ENCODE measurements at regions of chr6 and their contacts with region 1.

Region 1: GRCh38 chr6:28895134-28895812 is 28.5 kb downstream of the TRIM27 start:
- DNase-seq: peak; percentile 92 to 96
- H3K4me3 ChIP-seq: peak overlapping the region; percentile 62
- H3K4me3 Mint-ChIP-seq: peak overlapping the region; percentile 95
- H3K27ac Mint-ChIP-seq: peak overlapping the region; percentile 98
- H3K4me1 ChIP-seq: no peaks in the 10 kb centered on the region
- H3K4me1 Mint-ChIP-seq: no peaks in the 10 kb centered on the region
- H3K27me3 ChIP-seq: no peaks in the 10 kb centered on the region
- H3K27me3 Mint-ChIP-seq: no peaks in the 10 kb centered on the region
- CTCF ChIP-seq: no peak

Region 2: DNA sequence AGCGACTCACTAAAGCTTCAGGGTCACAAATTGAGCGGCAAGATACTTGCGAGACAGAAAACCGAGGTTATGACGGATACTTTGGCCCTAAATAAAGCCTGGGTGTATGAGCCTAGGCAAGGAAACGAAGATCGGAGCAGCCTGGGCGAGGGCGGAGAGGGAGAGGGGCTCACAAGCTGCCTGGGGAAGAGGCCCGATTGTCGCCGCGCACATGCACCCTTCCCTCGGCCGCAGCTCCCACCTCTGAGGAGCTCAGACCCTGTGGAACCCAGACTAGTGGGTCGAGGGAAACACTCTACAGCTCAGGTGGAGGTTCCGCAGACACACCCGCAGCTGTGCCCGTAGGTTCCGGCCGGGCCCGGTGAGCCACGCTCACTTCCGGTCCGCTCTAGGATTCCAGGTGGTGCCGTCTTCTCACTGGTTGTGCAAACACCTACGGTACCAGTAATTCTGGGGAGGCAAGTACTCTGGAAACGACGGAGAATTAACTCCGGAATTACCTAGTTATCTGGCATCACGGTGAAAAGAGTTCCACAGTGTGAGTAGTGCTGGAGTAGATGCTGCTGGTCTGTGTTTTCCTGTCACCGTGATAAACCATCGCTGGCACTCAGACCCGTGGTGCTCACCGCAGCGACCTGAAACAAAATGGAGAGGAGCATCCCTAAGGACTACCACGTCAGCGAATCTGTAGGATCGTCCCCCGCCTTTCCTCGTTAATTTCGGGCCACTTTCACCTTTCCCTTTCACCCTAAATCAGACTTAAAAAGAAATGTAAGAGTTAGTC is 308.1 kb before region 1 on chr6:
- CTCF ChIA-PET with region 1: no interaction called
- POLR2A ChIA-PET with region 1: no interaction called
- intact Hi-C with region 1: no loop called
- DNase-seq: no peak
- H3K4me3 ChIP-seq: no peak overlapping the region
- H3K4me3 Mint-ChIP-seq: no peak overlapping the region
- H3K27ac Mint-ChIP-seq: no peak overlapping the region
- H3K4me1 ChIP-seq: no peaks in the 10 kb centered on the region
- H3K4me1 Mint-ChIP-seq: peaks cover 11% of the 10 kb centered on the region
- H3K27me3 ChIP-seq: no peaks in the 10 kb centered on the region
- H3K27me3 Mint-ChIP-seq: peaks cover 7% of the 10 kb centered on the region
- CTCF ChIP-seq: no peak

Region 3: DNA sequence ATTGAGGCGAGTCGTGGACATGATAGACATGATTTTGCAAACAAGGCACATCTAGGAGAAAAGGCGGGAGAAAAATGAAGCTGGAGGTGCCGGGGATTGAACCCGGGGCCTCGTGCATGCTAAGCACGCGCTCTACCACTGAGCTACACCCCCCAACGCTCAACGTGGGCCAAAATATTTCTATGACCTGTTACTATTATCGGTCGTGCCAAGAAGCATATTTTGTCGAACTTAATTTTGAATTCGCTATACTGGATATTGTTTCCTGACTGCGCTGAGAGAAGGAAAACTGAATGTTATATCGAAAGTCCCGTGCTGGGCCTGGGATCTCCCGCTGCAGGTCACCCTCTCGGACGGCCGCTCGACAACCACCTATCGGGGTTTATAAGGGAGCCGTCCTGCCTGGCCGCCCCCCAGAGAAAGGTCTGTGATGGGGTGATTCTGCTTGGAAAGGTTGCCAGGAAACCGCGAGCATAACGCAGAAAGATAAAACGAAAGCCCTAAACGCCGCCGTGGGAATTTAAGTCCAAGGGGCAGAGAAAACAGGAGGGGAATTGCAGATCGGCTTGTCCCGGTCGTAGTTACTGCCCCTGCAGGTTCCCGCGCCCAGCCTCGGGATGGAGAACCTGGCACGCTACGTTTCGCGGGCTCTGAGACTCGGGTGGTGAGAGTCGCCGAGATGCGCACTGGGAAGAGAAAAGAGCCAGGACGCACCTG is 31.5 kb before region 1 on chr6:
- CTCF ChIA-PET with region 1: interaction called, 4 read pairs
- POLR2A ChIA-PET with region 1: interaction called, 18 read pairs
- intact Hi-C with region 1: loop called (anchors 1 kb)
- DNase-seq: peak; percentile 85 to 87
- H3K4me3 ChIP-seq: peak overlapping the region; percentile 81
- H3K4me3 Mint-ChIP-seq: peak overlapping the region; percentile 79
- H3K27ac Mint-ChIP-seq: peak overlapping the region; percentile 96
- H3K4me1 ChIP-seq: peaks cover 11% of the 10 kb centered on the region
- H3K4me1 Mint-ChIP-seq: peaks cover 20% of the 10 kb centered on the region
- H3K27me3 ChIP-seq: no peaks in the 10 kb centered on the region
- H3K27me3 Mint-ChIP-seq: no peaks in the 10 kb centered on the region
- CTCF ChIP-seq: no peak

Region 4: DNA sequence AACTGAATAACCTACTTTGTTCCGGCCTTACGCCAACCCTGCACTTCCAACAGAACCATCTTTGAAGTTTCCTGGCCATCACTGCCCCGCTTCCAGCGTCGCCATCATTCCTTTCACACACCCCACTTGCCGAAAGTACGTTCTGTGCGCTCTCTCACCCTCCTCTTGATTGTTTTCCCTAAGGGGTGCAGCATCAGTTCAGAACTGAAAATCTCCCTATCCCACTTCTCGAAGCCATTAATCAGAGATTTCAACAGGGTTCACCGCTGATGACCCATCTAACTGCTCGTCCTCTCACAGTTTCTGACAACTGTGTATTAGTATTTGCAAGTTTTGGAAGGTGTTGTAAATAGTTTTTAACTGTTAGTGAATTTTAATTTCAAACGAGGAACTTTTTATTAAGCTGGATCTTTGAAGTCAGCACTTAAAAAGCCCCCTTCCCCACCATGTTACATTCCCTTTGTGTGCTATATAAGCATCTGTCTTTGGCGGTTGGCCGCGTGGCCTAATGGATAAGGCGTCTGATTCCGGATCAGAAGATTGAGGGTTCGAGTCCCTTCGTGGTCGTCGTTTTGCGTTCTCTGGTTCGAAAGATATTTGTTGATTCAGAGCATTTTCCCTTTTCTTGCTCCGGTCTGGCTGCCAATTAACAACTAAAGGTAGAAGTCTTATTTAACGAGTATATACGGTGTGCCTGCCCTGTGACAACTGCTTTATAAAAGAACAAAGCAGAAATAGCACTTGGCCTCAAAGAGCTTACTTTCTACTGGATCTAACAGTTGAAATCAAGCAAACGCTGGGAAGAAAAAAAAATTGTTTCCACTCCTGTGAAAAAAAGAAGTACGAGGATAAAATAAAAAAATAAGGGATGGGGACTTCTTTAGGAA is 14.1 kb before region 1 on chr6:
- CTCF ChIA-PET with region 1: no interaction called
- POLR2A ChIA-PET with region 1: interaction called, 5 read pairs
- intact Hi-C with region 1: loop called (anchors 1 kb)
- DNase-seq: peak; percentile 62 to 72
- H3K4me3 ChIP-seq: no peak overlapping the region
- H3K4me3 Mint-ChIP-seq: peak overlapping the region; percentile 81
- H3K27ac Mint-ChIP-seq: peak overlapping the region; percentile 96
- H3K4me1 ChIP-seq: peaks cover 14% of the 10 kb centered on the region
- H3K4me1 Mint-ChIP-seq: peaks cover 18% of the 10 kb centered on the region
- H3K27me3 ChIP-seq: no peaks in the 10 kb centered on the region
- H3K27me3 Mint-ChIP-seq: no peaks in the 10 kb centered on the region
- CTCF ChIP-seq: no peak

Region 5: GRCh38 chr6:28923318-28924102 is 28.2 kb after region 1 on chr6 and contains the start of gene TRIM27:
- CTCF ChIA-PET with region 1: no interaction called
- POLR2A ChIA-PET with region 1: interaction called, 38 read pairs
- intact Hi-C with region 1: loop called (anchors 2 kb)
- DNase-seq: peak; percentile 89 to 92
- H3K4me3 ChIP-seq: peak within 1 kb of the TSS; percentile 96
- H3K4me3 Mint-ChIP-seq: peak within 1 kb of the TSS; percentile 94
- H3K27ac Mint-ChIP-seq: peak within 1 kb of the TSS; percentile 89
- H3K4me1 ChIP-seq: peaks cover 6% of the 10 kb centered on the region; the same call in 1 of the 2 replicates
- H3K4me1 Mint-ChIP-seq: peaks cover 7% of the 10 kb centered on the region
- H3K27me3 ChIP-seq: no peaks in the 10 kb centered on the region
- H3K27me3 Mint-ChIP-seq: no peaks in the 10 kb centered on the region
- CTCF ChIP-seq: peak in 1 of 2 experiments; percentile 9
- total RNA-seq, gene TRIM27: 47.6 and 48.7 TPM in 2 replicates

Region 6: DNA sequence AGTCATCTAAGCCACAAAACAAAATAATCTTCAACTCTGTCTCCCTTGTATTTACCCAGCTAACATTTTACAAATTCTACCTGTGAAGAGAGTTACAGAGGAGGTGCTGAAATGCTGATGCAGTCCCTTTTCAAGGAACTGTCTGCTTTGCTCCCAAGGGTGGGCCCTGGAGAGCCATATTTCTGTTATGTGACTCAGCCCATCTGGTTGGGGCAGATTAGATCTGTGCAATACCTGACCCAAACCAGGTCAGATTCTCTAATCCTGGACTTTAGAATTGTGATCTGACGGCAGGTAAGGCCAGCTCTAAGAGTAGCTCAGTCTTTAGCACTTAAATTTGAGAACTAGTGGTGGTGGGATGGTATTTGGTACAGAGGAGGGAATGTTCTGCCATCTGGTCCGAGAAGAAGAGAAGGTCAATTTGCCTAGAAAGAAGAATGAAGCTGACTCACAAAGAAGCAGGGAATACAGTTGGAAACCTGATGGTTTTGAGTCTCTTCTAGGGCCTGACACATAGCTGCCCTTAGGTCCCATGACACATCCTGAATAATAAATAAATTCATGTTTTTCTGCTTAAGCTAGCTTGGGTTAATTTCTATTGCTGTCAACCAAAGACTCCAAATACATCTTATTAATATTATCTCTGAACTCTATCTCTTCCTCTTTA is 101.7 kb after region 1 on chr6:
- CTCF ChIA-PET with region 1: no interaction called
- POLR2A ChIA-PET with region 1: no interaction called
- intact Hi-C with region 1: no loop called
- DNase-seq: no peak
- H3K4me3 ChIP-seq: no peak overlapping the region
- H3K4me3 Mint-ChIP-seq: no peak overlapping the region
- H3K27ac Mint-ChIP-seq: no peak overlapping the region
- H3K4me1 ChIP-seq: no peaks in the 10 kb centered on the region
- H3K4me1 Mint-ChIP-seq: peaks cover 7% of the 10 kb centered on the region
- H3K27me3 ChIP-seq: no peaks in the 10 kb centered on the region
- H3K27me3 Mint-ChIP-seq: no peaks in the 10 kb centered on the region
- CTCF ChIP-seq: no peak

Measured in Caco-2 (cell line).